ENCODE measurements at regions of chr22 and their contacts with region 1.

Region 1: GRCh38 chr22:36856121-36856791 is 4.5 kb upstream of the NCF4 start:
- DNase-seq: peak; percentile 88
- H3K4me3 Mint-ChIP-seq: no peak overlapping the region
- H3K27ac Mint-ChIP-seq: no peak overlapping the region
- H3K4me1 Mint-ChIP-seq: peaks cover 42% of the 10 kb centered on the region
- H3K27me3 Mint-ChIP-seq: peaks cover under 1% of the 10 kb centered on the region

Region 2: GRCh38 chr22:36546092-36546804 is 310.0 kb before region 1 on chr22:
- intact Hi-C with region 1: loop called (anchors 2 kb)
- DNase-seq: no peak
- H3K4me3 Mint-ChIP-seq: no peak overlapping the region
- H3K27ac Mint-ChIP-seq: no peak overlapping the region
- H3K4me1 Mint-ChIP-seq: peaks cover 23% of the 10 kb centered on the region
- H3K27me3 Mint-ChIP-seq: peaks cover 4% of the 10 kb centered on the region

Region 3: GRCh38 chr22:36873680-36874537 is 17.7 kb after region 1 on chr22:
- intact Hi-C with region 1: loop called (anchors 1 kb)
- DNase-seq: peak; percentile 22
- H3K4me3 Mint-ChIP-seq: no peak overlapping the region
- H3K27ac Mint-ChIP-seq: peak overlapping the region; percentile 86
- H3K4me1 Mint-ChIP-seq: peaks cover 22% of the 10 kb centered on the region
- H3K27me3 Mint-ChIP-seq: no peaks in the 10 kb centered on the region

Region 4: DNA sequence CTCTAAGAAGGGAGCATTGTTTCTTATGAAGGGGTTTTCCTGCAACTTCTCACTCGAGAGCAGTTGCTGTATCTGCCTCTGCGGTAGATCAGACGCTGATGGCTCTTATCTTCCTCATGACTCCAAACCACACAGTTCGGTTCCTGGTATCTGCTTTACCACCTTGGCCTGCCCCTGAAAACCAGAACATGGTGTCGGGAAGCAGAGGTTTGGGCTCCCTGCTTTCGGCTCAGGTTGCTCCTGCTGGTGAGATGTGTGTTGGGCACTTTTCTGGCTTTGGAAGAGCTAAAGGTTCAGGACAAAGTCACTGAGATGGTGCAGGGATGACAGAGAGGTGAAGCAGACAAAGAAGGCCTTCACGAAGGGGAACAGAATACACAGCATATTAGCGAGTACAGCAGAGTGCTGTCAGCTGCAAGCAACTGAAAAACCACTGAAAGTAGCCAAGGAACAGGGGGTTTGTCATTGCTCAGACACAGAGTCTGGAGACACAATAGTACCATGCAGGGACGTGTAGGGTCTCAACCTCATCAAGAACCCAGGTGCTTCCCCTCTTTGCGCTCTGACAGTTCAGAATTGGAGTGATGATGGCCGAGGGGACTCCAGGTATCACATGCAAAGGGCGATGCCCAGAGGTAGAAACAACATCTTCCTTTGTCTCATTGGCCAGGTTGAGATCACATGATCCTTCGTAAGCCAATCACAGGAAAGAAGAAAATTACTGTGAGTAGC is 45.3 kb after region 1 on chr22:
- intact Hi-C with region 1: loop called (anchors 2 kb)
- DNase-seq: peak; percentile 57
- H3K4me3 Mint-ChIP-seq: peak overlapping the region; percentile 57
- H3K27ac Mint-ChIP-seq: peak overlapping the region; percentile 95
- H3K4me1 Mint-ChIP-seq: peaks cover 31% of the 10 kb centered on the region
- H3K27me3 Mint-ChIP-seq: peaks cover 7% of the 10 kb centered on the region

Region 5: GRCh38 chr22:37166675-37167066 is 310.4 kb after region 1 on chr22:
- intact Hi-C with region 1: loop called (anchors 5 kb)
- DNase-seq: peak; percentile 75
- H3K4me3 Mint-ChIP-seq: peak overlapping the region; percentile 68
- H3K27ac Mint-ChIP-seq: peak overlapping the region; percentile 79
- H3K4me1 Mint-ChIP-seq: peaks cover 64% of the 10 kb centered on the region
- H3K27me3 Mint-ChIP-seq: no peaks in the 10 kb centered on the region